ENCODE measurements at regions of chr7 and their contacts with region 1.

Region 1: GRCh38 chr7:101602484-101603241 is 26.4 kb downstream of the MYL10 start:
- DNase-seq: peak; percentile 74
- H3K4me3 Mint-ChIP-seq: no peak overlapping the region
- H3K27ac Mint-ChIP-seq: no peak overlapping the region
- H3K4me1 Mint-ChIP-seq: no peaks in the 10 kb centered on the region
- H3K27me3 Mint-ChIP-seq: no peaks in the 10 kb centered on the region
- CTCF ChIP-seq: peak; percentile 92

Region 2: DNA sequence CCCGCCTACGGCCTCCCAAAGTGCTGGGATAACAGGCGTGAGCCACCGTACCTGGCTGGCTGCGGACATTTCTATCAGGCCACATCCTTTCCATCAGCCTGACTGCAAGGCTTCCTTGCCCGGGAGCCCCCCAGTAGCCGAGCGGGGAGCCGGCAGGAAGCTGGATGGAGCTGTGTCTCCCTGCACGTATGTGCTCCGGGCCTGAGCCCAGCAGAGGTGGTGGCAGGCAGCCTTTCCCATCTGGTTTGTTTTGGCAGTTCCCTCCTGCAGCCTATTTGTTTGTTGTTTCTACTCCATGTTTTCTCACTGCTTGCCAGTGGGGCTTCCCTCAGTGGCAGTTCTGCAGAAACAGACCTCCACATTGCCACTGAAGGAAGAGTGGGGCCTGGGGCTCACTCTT is 891.3 kb before region 1 on chr7:
- CTCF ChIA-PET with region 1: no interaction called
- POLR2A ChIA-PET with region 1: no interaction called
- intact Hi-C with region 1: no loop called
- DNase-seq: no peak
- H3K4me3 Mint-ChIP-seq: no peak overlapping the region
- H3K27ac Mint-ChIP-seq: no peak overlapping the region
- H3K4me1 Mint-ChIP-seq: peaks cover 10% of the 10 kb centered on the region
- H3K27me3 Mint-ChIP-seq: no peaks in the 10 kb centered on the region
- CTCF ChIP-seq: no peak

Region 3: DNA sequence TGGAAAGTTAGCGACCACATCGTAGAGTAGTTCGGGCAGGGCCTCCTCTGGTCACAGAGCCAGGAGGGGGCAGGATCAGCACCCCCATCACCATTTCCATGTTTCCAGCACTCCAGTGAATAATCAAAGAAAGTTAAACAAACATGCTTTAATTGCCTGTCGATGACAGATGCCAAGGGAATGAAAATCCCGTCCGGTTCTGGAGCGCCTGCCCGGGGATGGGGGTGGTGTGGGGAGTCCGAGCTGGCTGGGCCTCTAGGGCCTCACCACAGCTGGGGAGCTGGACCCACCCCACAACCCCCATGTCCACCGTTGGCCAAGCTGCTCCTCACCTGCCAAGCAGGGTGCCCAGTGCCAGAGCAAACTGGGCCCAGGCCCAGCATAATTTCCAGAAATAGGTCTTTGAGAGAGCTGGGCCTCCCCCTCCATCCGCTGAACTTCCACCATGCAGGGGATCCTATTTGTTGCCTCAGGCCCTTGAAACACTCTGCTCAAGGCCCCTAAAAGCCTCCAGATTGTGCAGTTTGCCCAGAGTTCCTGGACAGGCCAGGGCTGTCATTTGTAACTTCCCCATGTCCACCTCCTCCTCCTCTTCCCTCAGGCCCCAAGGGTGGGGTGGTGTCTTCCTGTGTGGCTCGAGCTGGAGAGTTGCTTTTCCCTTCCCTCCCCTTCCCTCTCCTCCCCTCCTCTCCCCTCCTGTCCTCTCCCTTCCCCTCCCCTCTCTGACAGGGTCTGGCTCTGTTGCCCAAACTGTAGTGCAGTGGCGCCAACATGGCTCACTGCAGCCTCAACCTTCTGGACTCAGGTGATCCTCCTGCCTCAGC is 74.6 kb before region 1 on chr7:
- CTCF ChIA-PET with region 1: no interaction called
- POLR2A ChIA-PET with region 1: no interaction called
- intact Hi-C with region 1: no loop called
- DNase-seq: no peak
- H3K4me3 Mint-ChIP-seq: no peak overlapping the region
- H3K27ac Mint-ChIP-seq: no peak overlapping the region
- H3K4me1 Mint-ChIP-seq: no peaks in the 10 kb centered on the region
- H3K27me3 Mint-ChIP-seq: peaks cover 26% of the 10 kb centered on the region
- CTCF ChIP-seq: no peak

Region 4: GRCh38 chr7:101589976-101590669 is 12.5 kb before region 1 on chr7:
- CTCF ChIA-PET with region 1: interaction called, 16 read pairs
- POLR2A ChIA-PET with region 1: no interaction called
- intact Hi-C with region 1: no loop called
- DNase-seq: peak; percentile 28
- H3K4me3 Mint-ChIP-seq: no peak overlapping the region
- H3K27ac Mint-ChIP-seq: no peak overlapping the region
- H3K4me1 Mint-ChIP-seq: no peaks in the 10 kb centered on the region
- H3K27me3 Mint-ChIP-seq: no peaks in the 10 kb centered on the region
- CTCF ChIP-seq: no peak

Region 5: DNA sequence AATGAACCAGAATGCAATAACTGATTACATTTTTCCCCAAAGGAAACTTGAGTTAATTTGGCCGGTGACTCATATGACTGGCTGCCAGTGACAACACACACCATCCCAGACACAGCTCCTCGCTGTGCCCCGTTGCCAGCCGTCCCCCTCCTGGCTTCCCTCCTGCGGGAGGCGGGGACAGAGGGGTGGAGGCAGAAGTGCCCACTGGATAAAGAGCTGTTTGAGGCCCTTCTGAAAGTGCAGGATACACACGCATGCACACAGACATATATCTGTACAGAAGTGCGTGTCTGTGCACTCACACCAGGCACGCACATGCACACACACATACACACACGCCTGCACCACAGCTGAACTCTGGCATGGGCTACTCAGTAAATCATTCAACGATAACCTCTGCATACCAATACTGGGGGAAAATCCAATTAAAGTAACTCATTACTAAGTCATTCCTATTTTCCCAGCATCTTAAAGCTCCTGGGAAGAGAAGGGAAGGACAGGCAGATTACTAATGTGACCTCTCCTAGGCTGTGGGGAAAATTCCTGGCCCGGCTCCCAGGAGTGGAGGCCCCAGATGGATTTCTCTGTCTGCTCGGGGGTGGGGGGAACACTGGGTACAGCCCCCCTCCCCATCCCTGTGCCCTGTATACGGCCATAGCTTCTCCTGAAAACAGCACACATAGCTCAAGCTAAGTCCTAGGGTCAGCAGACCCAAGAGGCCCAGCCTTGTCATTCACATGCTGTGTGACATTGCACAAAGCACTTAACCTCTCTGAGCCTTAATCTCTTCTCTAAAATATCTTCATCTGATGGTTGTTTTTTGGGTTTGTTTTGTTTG is 78.7 kb after region 1 on chr7:
- CTCF ChIA-PET with region 1: interaction called, 6 read pairs
- POLR2A ChIA-PET with region 1: no interaction called
- intact Hi-C with region 1: loop called (anchors 5 kb)
- DNase-seq: peak; percentile 89
- H3K4me3 Mint-ChIP-seq: no peak overlapping the region
- H3K27ac Mint-ChIP-seq: no peak overlapping the region
- H3K4me1 Mint-ChIP-seq: peaks cover 21% of the 10 kb centered on the region
- H3K27me3 Mint-ChIP-seq: no peaks in the 10 kb centered on the region
- CTCF ChIP-seq: no peak

Region 6: DNA sequence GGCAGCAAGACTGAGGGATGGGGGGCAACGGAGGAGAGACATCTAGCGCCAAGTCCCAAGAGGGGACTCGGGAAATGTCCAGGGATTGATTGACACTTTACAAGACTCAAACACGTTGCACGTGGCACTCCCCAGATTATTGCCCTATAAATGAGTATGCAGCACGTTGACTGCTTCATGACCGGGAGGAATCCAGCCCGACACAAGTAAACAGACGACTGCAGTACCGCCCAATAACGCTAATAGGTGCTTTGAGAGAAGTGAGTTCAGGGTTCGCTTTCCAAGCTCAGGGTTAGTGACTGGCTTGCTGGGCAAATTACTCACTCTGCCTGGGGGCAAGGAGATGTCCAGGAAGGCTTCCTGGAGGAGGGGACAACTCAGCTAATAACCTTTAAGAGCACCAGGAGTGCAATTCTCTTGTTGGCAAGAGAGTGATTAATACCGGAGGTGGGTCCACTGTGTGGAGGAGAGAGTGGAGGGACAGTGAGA is 99.7 kb after region 1 on chr7:
- CTCF ChIA-PET with region 1: no interaction called
- POLR2A ChIA-PET with region 1: no interaction called
- intact Hi-C with region 1: no loop called
- DNase-seq: no peak
- H3K4me3 Mint-ChIP-seq: no peak overlapping the region
- H3K27ac Mint-ChIP-seq: no peak overlapping the region
- H3K4me1 Mint-ChIP-seq: peaks cover 6% of the 10 kb centered on the region
- H3K27me3 Mint-ChIP-seq: peaks cover 16% of the 10 kb centered on the region
- CTCF ChIP-seq: no peak

Measured in MCF 10A (cell line).